Psoas muscle (tissue), 8 donors: ENCODE measurements at regions of chr21 and their contacts with region 1.

Region 1: DNA sequence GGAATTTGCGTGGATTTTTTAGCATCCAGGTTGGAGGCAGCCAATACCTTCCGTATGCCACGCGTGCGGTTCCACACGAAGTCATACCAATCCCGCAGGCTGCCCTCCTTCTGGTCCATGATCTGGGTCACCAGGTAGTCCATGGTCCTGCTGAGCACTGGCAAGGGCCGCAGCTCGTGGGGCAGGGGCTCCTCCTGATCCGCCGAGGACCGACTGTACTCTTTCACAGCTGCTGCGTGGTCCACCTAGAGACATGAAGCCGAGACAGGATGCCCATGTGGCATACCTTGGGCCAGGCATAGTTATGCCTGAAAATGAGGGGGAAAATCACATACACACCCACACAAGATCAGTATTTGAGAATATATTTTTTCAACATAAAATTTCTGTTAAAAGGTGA is 12.1 kb downstream of the MCM3AP start:
- DNase-seq: no peak
- ATAC-seq: no peak
- H3K4me3 ChIP-seq: no peak overlapping the region
- H3K27ac ChIP-seq: no peak overlapping the region
- H3K4me1 ChIP-seq: no peaks in the 10 kb centered on the region
- H3K27me3 ChIP-seq: no peaks in the 10 kb centered on the region
- CTCF ChIP-seq: no peak

Region 2: GRCh38 chr21:46237474-46237873 is 35.9 kb before region 1 on chr21:
- intact Hi-C with region 1: loop called in 1 of 2 experiments (anchors 5 kb)
- DNase-seq: no peak
- ATAC-seq: no peak
- H3K4me3 ChIP-seq: no peak overlapping the region
- H3K27ac ChIP-seq: no peak overlapping the region
- H3K4me1 ChIP-seq: no peaks in the 10 kb centered on the region
- H3K27me3 ChIP-seq: no peaks in the 10 kb centered on the region
- CTCF ChIP-seq: no peak

Region 3: DNA sequence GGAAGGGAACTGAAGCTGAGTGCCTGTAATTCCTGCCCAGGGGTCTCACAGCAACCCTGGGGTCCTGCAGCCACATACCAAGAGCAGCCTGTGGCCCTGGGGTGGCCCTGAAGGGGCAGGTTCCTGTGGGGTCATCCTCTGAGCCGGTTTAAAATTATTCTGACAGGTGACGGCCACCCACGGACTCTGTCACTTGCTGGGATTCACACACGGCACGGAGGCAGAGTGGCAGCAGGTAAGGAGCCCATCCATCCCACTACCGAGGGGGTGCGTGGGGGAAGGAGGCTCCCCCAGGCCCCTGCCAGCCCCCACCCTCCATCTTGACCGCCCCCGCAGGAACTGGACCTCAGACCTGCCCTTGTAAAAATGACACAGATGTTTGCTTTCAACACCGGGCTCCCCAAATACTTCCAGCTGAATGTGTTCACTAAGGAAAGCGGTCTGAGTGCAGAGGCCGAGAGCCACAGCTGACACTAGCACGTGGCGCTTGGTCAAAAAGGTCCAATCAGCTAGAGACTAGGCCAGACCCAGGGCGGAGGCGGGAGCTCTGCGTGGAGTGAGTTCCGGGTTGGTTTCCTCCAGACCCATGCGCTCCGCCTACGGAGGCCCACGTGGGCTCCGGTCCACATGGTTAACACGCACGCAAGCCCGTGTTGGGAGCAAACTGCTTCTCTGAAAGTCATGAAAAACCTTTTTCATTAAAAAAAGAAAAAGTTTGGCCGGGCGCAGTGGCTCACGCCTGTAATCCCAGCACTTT is 22.8 kb after region 1 on chr21:
- intact Hi-C with region 1: no loop called
- DNase-seq: peak; percentile 89 to 93
- ATAC-seq: peak; percentile 75 to 86 (median 86)
- H3K4me3 ChIP-seq: peak overlapping the region; percentile 28
- H3K27ac ChIP-seq: peak overlapping the region; percentile 70
- H3K4me1 ChIP-seq: peaks cover 15% of the 10 kb centered on the region
- H3K27me3 ChIP-seq: peaks cover 0 to 21% (median 2%) of the 10 kb centered on the region in 3 donors
- CTCF ChIP-seq: no peak

Region 4: GRCh38 chr21:46498335-46499050 is 225.2 kb after region 1 on chr21:
- intact Hi-C with region 1: loop called in 1 of 2 experiments (anchors 10 kb)
- DNase-seq: no peak
- ATAC-seq: no peak
- H3K4me3 ChIP-seq: no peak overlapping the region
- H3K27ac ChIP-seq: no peak overlapping the region
- H3K4me1 ChIP-seq: no peaks in the 10 kb centered on the region
- H3K27me3 ChIP-seq: no peaks in the 10 kb centered on the region
- CTCF ChIP-seq: no peak

Region 5: GRCh38 chr21:46585191-46585953 is 312.0 kb after region 1 on chr21:
- intact Hi-C with region 1: no loop called
- DNase-seq: no peak
- ATAC-seq: no peak
- H3K4me3 ChIP-seq: no peak overlapping the region
- H3K27ac ChIP-seq: no peak overlapping the region
- H3K4me1 ChIP-seq: no peaks in the 10 kb centered on the region
- H3K27me3 ChIP-seq: no peaks in the 10 kb centered on the region
- CTCF ChIP-seq: no peak